Heart right ventricle (tissue), 16 donors: ENCODE measurements at regions of chr19 and their contacts with region 1.

Region 1: DNA sequence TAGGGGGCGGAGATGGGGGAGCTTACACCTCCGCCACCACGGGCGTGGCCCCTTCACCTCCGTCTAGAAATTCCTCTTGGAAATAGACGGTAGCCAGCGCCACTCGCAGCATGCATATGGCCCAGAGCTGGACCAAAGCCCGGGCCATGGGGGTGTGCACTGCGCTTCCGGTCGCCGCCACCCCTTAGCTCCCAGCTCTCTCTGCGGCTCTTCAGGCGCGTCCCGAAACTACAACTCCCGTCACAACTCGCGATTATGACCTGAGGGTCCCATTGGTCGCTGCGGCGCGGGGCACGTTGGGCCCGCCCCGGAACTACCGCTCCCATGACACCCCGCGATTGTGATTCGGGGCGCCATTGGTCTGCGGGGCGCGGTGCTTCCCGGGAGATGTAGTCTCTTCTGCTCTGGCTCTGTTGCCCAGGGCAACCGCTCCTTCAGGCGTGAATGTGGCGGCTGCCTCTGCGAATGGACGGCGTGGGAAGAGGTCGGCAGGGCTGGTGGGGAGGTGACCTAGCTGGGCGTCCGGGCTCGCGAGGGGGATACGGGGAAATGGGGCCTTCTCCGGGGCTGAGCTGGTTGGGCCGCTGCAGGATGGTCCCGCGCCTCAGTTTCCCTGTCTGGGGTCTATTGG is at the starts of genes C19orf44 and CALR3:
- DNase-seq: peak; percentile 98 to 99
- ATAC-seq: peak; percentile 99 to 100 (median 99)
- H3K4me3 ChIP-seq: peak within 1 kb of the TSS; percentile 37 to 81 (median 72)
- H3K27ac ChIP-seq: peak within 1 kb of the TSS; percentile 24 to 89 (median 79)
- H3K4me1 ChIP-seq: peaks cover 0 to 18% (median 8%) of the 10 kb centered on the region in 9 donors
- H3K27me3 ChIP-seq: no peaks in the 10 kb centered on the region
- CTCF ChIP-seq: peak in 7 of 9 donors; percentile 7 to 55 (median 24)
- total RNA-seq, gene C19orf44: 1.6 to 3.5 (median 2.9) TPM
- total RNA-seq, gene CALR3: 0.22 TPM in 1 of 10 donors, not detected in the others

Region 2: DNA sequence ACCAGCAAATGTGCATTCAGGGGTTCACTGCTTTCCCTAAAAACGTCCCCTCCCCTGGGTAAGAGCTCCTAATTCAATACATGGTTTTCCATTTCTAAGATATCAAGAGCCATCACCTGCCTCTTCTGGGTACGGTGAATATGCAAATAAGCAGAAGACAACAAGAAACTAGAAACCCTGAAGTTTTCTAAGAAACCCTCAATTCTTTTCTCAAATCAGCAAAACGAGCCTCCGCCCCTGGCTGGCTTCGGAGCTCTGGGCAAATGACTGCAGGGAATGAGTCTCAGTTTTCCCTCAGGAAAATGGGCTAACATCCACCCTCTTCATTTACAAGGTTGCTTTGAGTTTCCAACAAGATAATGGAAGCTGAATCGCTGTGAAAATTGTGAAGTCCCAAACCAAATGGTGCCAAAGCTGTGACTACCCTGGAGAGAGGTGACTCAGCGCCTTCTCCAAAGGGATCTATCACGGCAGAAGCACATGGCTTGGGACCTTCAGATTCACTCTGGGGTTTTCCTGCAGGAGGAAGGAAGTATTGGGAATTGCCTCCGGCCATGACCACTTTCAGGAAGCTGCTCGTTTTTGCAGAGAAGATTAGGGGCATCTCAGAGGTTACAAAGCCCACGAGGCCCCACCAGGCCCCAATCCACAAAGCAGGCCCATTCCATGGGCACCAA is 144.8 kb before region 1 on chr19:
- intact Hi-C with region 1: no loop called
- DNase-seq: no peak
- ATAC-seq: peak in 1 of 8 donors; percentile 12
- H3K4me3 ChIP-seq: no peak overlapping the region
- H3K27ac ChIP-seq: peak overlapping the region in 5 of 10 donors; percentile 17 to 39 (median 20)
- H3K4me1 ChIP-seq: peaks cover 4 to 69% (median 52%) of the 10 kb centered on the region in 9 donors
- H3K27me3 ChIP-seq: no peaks in the 10 kb centered on the region
- CTCF ChIP-seq: no peak

Region 3: DNA sequence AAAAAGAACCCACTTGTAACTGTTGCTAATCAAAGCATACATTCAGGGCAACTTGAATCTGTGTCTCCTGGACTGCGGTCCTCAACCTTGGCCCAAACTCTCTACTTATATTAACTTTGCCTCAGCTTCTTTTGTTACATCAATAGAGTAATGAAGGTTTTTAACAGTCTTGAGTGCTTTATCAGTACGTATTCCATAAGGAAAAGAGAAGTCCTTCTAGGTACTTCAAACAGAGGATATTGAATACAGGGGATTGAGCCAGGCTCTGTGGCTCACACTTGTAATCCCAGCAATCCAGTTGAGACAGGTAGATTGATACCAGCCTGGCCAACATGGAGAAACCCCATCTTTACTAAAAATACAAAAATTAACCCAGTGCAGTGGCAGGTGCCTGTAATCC is 23.1 kb before region 1 on chr19:
- intact Hi-C with region 1: loop called in 1 of 10 experiments (anchors 1 kb)
- DNase-seq: no peak
- ATAC-seq: no peak
- H3K4me3 ChIP-seq: no peak overlapping the region
- H3K27ac ChIP-seq: no peak overlapping the region
- H3K4me1 ChIP-seq: peaks cover 16 to 39% (median 33%) of the 10 kb centered on the region in 9 donors
- H3K27me3 ChIP-seq: no peaks in the 10 kb centered on the region
- CTCF ChIP-seq: no peak

Region 4: GRCh38 chr19:16542045-16542909 is 46.2 kb after region 1 on chr19 and contains the start of gene CHERP:
- intact Hi-C with region 1: loop called in 1 of 10 experiments (anchors 5 kb)
- DNase-seq: peak; percentile 94 to 96
- ATAC-seq: peak; percentile 96 to 98 (median 98)
- H3K4me3 ChIP-seq: peak within 1 kb of the TSS; percentile 76 to 100 (median 90)
- H3K27ac ChIP-seq: peak within 1 kb of the TSS; percentile 80 to 97 (median 90)
- H3K4me1 ChIP-seq: peaks cover 17 to 50% (median 38%) of the 10 kb centered on the region in 9 donors
- H3K27me3 ChIP-seq: no peaks in the 10 kb centered on the region
- CTCF ChIP-seq: peak in 1 of 9 donors; percentile 2
- total RNA-seq, gene CHERP: 20.0 to 26.6 (median 22.6) TPM